ENCODE measurements at regions of chr4 and their contacts with region 1.

Region 1: GRCh38 chr4:121484633-121485032 is 103.8 kb upstream of the QRFPR start:
- DNase-seq: peak; percentile 50
- CTCF ChIP-seq: peak; percentile 70

Region 2: DNA sequence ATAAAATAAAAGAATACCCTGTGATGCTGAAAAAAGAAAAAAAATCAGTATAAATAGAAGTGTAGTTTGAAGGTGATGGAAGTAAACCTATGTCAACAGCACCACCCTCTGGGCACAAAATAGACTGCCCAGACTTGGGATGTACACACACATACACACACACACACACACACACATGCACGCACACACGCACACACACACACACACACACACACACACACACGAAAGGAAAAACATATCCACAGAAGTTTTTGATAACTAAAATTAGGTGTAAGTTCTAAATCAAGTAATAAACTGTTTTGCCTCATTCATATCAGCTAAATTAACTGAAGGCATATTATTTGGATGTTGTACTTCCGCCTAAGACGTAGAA is 171.6 kb after region 1 on chr4:
- in situ Hi-C with region 1: loop called (anchors 10 kb)
- DNase-seq: peak; percentile 17
- CTCF ChIP-seq: peak; percentile 39